ENCODE measurements at regions of chr3 and their contacts with region 1.

Region 1: GRCh38 chr3:11601446-11602238 is 42.1 kb downstream of the VGLL4 start:
- DNase-seq: no peak

Region 2: DNA sequence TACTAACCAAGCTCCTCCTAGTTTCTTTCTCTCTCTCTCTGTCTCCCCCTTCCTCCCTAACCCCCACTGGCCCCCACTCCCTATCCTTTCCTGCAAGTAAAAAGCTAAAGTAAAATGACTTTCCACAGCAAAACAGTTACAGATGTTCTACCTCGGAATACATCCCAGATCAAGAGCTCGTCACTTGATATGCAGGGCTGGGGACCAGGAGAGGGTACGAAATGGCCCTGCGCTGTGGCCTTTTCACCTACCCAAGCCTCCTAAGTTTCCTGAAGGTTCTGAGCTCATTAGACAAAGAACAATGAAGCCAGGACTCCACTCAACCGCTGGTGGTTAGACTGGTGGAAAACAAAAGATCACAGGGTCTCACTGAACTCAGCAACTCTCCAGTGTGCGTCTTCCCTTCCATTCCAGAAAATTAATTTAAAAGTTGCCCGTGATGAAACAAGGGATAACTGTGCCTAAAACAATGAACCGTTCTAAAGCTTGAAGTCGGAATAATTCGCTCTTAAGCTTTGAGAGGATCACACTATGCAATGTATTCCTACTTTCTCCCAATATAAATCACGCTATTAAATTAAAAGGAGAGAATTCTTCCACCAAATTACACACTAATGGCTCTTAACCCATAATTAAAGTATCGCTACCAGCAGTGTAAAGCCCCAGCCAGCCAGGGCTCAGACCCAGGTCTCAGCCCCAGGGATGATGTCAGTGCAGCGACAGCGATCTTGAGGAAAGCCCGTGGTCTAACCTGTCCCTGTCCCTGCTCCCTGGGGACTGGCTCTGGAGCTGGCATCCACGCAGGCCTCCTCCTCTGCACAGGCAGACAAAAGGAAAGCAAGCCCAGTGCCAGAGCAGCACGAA is 37.1 kb after region 1 on chr3:
- in situ Hi-C with region 1: loop called (anchors 5 kb)
- DNase-seq: no peak